Right ventricle myocardium inferior (tissue), 1 donor: ENCODE measurements at regions of chr16 and their contacts with region 1.

Region 1: GRCh38 chr16:88811769-88812512 is at the start of gene APRT:
- DNase-seq: peak; percentile 96
- ATAC-seq: peak; percentile 94
- total RNA-seq, gene APRT: 45.3 TPM

Region 2: DNA sequence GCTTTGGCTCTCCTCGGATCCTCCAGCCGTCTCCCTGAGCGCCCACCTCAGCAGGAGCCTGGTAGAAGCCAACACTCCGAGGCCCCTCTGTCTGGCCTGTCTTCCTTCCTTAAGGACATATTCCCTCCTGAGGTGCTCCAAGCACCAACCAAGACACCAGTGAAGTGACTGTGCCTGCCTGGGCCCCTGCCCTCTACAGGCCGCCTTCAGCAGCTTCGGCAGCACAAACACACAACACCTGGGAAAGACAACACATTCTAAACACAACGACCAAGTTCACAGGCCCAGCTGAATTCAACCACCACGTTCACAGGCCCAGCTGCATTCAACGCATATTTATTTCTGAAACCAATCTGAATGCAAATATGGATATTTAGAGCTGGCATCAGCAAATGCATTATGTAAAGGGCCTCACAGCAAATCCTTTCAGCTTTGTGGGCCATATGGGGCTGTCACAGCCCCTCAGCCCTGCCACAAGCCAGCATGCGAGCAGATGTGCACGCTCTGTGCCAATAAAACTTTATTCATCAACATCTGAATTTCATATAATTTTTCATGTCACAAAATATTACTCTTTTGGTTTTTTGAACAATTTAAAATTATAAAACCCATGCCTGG is 32.6 kb after region 1 on chr16:
- intact Hi-C with region 1: no loop called
- DNase-seq: no peak
- ATAC-seq: no peak

Region 3: DNA sequence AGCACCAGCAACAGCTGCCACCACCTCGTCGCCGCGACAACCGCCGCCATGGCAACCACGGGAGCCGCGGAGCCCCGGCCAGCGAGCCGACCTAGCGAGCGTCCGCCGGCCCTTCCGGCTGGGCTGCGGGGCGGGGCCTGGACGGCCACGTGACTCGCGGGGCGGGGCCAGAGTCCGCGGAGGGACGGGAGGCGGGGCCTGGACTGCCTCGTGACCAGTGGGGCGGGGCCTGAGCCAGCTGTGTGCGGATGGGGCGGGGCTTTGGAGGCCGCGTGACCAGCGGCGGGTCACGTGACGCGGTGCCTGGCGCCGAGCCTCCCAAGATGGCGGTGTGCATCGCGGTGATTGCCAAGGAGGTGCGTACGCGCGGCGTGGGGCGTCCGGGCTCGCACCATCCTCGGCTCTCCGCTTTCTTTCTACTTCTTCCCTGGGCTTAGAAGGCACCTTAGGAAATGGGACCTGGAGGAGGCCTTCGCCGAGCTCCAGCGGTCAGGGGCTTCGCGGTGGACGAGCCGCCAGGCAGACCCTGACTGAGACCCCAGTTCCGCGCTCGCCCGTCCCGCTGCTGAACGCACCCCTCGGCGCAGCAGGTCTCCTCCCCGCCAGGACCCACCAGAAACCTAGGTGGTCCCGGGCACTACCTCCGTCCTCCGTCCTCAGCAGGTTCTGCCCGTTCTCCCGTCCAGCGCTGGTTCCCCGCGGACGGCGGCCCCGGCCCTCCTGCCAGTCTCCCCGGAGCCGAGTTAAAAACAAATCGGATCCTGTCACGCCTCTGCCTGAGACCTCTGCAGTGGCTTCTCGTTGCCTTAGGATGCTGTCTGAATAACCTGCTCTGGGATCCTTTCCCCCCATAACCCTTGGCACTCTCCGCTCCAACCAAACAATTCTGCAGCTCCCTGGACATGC is 45.1 kb after region 1 on chr16 and contains the starts of genes GALNS and TRAPPC2L:
- intact Hi-C with region 1: loop called (anchors 1 kb)
- DNase-seq: peak; percentile 100
- ATAC-seq: peak; percentile 98
- total RNA-seq, gene GALNS: 15.8 TPM
- total RNA-seq, gene TRAPPC2L: 58.7 TPM

Region 4: GRCh38 chr16:89171463-89172170 is 359.7 kb after region 1 on chr16 and contains the start of gene CDH15:
- intact Hi-C with region 1: loop called (anchors 5 kb)
- DNase-seq: peak; percentile 95
- ATAC-seq: peak; percentile 94
- total RNA-seq, gene CDH15: not detected